HCT116 (cell line): ENCODE measurements at regions of chr20 and their contacts with region 1.

Region 1: GRCh38 chr20:12207875-12208274 is 290.2 kb downstream of the BTBD3 start:
- DNase-seq: peak; percentile 0
- ATAC-seq: no peak
- H3K4me3 ChIP-seq: no peak overlapping the region
- H3K27ac ChIP-seq: no peak overlapping the region
- H3K4me1 ChIP-seq: no peaks in the 10 kb centered on the region
- H3K27me3 ChIP-seq: no peaks in the 10 kb centered on the region
- CTCF ChIP-seq: peak in 2 of 3 experiments; percentile 41 to 46; a peak in 3 of 6 replicates
- POLR2A ChIP-seq: no peak
- RAD21 ChIP-seq: no peak

Region 2: GRCh38 chr20:11676630-11677284 is 531.1 kb before region 1 on chr20:
- CTCF ChIA-PET with region 1: no interaction called
- POLR2A ChIA-PET with region 1: no interaction called
- RAD21 ChIA-PET with region 1: no interaction called
- intact Hi-C with region 1: loop called (anchors 10 kb)
- DNase-seq: peak; percentile 6
- ATAC-seq: peak; percentile 86
- H3K4me3 ChIP-seq: no peak overlapping the region
- H3K27ac ChIP-seq: no peak overlapping the region
- H3K4me1 ChIP-seq: no peaks in the 10 kb centered on the region
- H3K27me3 ChIP-seq: peaks cover 4% of the 10 kb centered on the region; the same call in 1 of the 2 replicates
- CTCF ChIP-seq: peak; percentile 32 to 82 (median 73); a peak in 5 of 6 replicates
- POLR2A ChIP-seq: no peak
- RAD21 ChIP-seq: peak; percentile 67